ENCODE measurements at regions of chr7 and their contacts with region 1.

Region 1: DNA sequence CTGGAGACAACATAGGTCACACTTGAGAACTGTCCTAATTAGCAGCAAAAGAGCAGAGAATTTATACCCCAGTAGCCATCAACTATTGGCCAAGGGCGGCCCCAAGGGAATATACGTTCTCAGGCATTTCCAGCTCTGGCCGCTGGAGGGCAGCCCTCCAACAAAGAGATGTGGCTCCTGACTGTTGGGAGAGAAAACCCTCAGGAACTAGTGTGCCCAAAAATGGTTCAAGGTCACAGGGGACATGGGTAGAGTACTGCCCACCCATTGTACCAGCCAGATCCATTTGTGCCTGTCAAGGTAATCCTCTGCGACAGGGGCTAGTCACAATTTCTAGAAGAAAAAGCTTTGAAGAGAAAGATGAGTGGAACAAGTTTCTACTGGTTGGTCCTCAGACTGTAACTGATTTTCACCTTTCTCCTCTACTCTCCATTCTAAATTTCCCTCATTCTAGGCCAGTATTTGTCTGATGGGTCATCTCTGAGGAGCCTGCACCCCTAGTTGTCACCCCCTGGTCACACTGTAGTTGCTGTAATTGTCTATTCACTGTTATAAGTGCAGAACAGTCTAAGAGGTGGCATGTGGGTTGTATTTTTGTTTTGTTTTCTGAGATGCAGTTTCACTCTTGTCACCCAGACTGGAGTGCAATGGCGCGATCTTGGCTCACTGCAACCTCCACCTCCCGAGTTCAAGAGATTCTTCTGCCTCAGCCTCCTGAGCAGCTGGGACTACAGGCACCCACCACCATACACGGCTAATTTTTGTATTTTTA is 14.7 kb upstream of the C7orf33 start:
- DNase-seq: peak; percentile 74
- H3K4me3 ChIP-seq: no peak overlapping the region
- H3K27ac ChIP-seq: no peak overlapping the region
- H3K4me1 ChIP-seq: no peaks in the 10 kb centered on the region
- CTCF ChIP-seq: peak; percentile 89

Region 2: DNA sequence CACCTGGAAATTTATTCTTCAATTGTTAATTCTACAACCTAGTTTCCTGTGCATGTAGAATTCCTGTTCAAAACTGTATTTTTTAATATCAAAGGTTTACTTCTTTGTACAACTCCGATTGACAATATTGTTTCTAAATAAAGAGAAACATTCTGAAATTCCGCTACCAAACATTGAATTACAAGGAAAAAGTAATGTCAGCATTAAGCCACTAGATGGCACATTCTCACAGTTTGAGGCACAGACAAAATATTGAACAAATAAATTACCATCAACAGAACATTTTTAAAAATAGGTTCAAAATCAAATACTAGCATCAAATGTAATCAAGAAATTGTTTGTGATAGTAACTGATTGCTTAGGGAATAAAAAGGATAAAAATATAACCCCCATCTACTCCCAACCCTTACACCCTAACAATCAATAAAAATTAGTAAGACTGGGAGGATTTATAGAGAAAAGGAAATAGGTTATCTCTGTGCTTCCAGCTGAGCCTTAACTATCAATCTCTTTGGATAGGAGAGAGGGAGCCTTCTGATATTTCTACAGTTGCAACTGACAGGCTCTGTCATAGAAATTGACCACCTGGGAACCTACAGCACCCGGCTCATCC is 71.8 kb before region 1 on chr7:
- CTCF ChIA-PET with region 1: no interaction called
- POLR2A ChIA-PET with region 1: no interaction called
- intact Hi-C with region 1: loop called (anchors 5 kb)
- DNase-seq: peak; percentile 47
- H3K4me3 ChIP-seq: no peak overlapping the region
- H3K27ac ChIP-seq: no peak overlapping the region
- H3K4me1 ChIP-seq: peaks cover 9% of the 10 kb centered on the region
- CTCF ChIP-seq: peak; percentile 98

Region 3: DNA sequence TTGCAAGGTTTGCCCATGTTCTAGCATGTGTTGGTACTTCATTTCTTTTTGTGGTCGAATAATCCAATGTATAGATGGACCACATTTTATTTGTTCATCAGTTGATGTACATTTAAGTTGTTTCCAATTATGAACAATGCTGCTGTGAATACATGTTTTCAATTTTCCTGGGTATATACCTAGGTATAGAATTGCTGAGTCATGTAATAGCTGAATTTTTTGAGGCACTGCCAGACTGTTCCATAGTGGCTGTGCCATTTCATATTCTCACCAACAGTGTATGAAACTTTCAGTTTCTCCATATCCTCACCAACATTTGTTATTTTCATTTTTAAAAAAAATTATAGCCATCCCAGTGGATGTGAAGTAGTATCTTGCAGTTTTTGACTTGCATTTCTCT is 217.8 kb after region 1 on chr7:
- CTCF ChIA-PET with region 1: no interaction called
- POLR2A ChIA-PET with region 1: no interaction called
- intact Hi-C with region 1: loop called (anchors 10 kb)
- DNase-seq: no peak
- H3K4me3 ChIP-seq: no peak overlapping the region
- H3K27ac ChIP-seq: no peak overlapping the region
- H3K4me1 ChIP-seq: no peaks in the 10 kb centered on the region
- CTCF ChIP-seq: no peak

Region 4: DNA sequence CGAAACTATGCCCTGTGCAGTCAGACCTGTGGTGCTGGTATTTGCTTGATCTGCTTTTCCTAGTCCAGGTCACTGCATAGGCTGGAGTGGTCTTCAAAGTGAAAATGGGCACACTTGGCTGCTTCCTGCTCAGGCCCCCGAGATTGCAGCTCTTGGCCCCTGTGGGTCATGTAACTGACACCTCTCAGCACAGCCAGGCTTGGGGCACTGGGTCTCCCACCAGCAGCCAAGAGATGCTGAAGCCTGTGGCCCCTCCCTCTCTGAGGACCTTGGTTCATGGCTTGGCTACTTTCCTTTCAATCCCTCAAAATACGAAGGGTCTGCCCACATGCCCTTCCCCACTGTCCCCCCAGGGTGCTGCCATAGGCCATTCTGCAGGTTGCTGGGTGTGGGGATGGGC is 418.8 kb after region 1 on chr7:
- CTCF ChIA-PET with region 1: no interaction called
- POLR2A ChIA-PET with region 1: no interaction called
- intact Hi-C with region 1: no loop called
- DNase-seq: no peak
- H3K4me3 ChIP-seq: no peak overlapping the region
- H3K27ac ChIP-seq: no peak overlapping the region
- H3K4me1 ChIP-seq: no peaks in the 10 kb centered on the region
- CTCF ChIP-seq: no peak